CD4-positive, alpha-beta T cell (primary cell): ENCODE measurements at regions of chr3 and their contacts with region 1.

Region 1: GRCh38 chr3:4512895-4513616 is 19.9 kb downstream of the ITPR1 start:
- DNase-seq: no peak
- ATAC-seq: no peak
- H3K4me3 ChIP-seq: no peak overlapping the region
- H3K4me3 Mint-ChIP-seq: no peak overlapping the region
- H3K27ac ChIP-seq: no peak overlapping the region
- H3K27ac Mint-ChIP-seq: no peak overlapping the region
- H3K4me1 ChIP-seq: peaks cover 14% of the 10 kb centered on the region
- H3K4me1 Mint-ChIP-seq: peaks cover 59% of the 10 kb centered on the region
- H3K27me3 ChIP-seq: no peaks in the 10 kb centered on the region
- H3K27me3 Mint-ChIP-seq: no peaks in the 10 kb centered on the region
- CTCF ChIP-seq: no peak

Region 2: DNA sequence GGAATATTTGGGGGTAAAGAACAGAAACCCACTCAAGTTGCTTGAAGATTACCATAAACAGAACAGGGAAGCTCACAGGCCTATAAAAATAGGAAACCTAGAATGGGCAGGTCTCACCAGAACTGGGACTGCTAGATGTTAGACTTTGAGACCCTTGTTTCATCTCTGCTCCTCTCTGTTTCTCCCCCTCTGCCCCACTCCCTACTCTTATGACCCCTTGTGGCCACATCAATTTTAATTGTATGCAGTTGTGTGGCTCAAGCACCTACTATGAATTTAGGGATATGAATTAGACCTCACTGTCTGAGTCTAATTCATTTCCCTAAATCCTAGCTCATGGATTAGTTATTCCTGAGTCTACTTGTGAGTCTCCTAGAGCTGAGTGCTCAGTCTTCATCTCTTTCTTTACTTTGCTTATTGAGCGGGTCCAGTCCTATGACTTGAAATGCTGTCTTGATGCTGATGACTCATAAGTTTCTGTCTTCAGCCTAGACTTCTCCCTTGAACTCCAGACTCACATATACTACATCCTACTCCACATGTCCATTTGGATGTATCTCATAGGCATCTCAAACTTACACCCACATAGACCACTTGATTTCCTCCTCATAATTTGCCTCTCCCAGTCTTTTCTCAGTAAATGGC is 58.8 kb after region 1 on chr3:
- CTCF ChIA-PET with region 1: no interaction called
- POLR2A ChIA-PET with region 1: no interaction called
- intact Hi-C with region 1: loop called in 1 of 2 experiments (anchors 5 kb)
- DNase-seq: peak in 3 of 14 experiments; percentile 20 to 35 (median 27)
- ATAC-seq: peak; percentile 51
- H3K4me3 ChIP-seq: no peak overlapping the region
- H3K4me3 Mint-ChIP-seq: no peak overlapping the region
- H3K27ac ChIP-seq: no peak overlapping the region
- H3K27ac Mint-ChIP-seq: no peak overlapping the region
- H3K4me1 ChIP-seq: no peaks in the 10 kb centered on the region
- H3K4me1 Mint-ChIP-seq: peaks cover 13% of the 10 kb centered on the region
- H3K27me3 ChIP-seq: no peaks in the 10 kb centered on the region
- H3K27me3 Mint-ChIP-seq: no peaks in the 10 kb centered on the region
- CTCF ChIP-seq: peak; percentile 22

Region 3: GRCh38 chr3:4584456-4585249 is 71.6 kb after region 1 on chr3:
- CTCF ChIA-PET with region 1: no interaction called
- POLR2A ChIA-PET with region 1: no interaction called
- intact Hi-C with region 1: loop called in 1 of 2 experiments (anchors 5 kb)
- DNase-seq: peak in 4 of 14 experiments; percentile 35 to 58 (median 45)
- ATAC-seq: peak; percentile 48
- H3K4me3 ChIP-seq: peak overlapping the region; percentile 41
- H3K4me3 Mint-ChIP-seq: peak overlapping the region; percentile 88
- H3K27ac ChIP-seq: peak overlapping the region in 1 of 2 donors; percentile 42
- H3K27ac Mint-ChIP-seq: peak overlapping the region; percentile 79
- H3K4me1 ChIP-seq: peaks cover 35% of the 10 kb centered on the region
- H3K4me1 Mint-ChIP-seq: peaks cover 80% of the 10 kb centered on the region
- H3K27me3 ChIP-seq: no peaks in the 10 kb centered on the region
- H3K27me3 Mint-ChIP-seq: no peaks in the 10 kb centered on the region
- CTCF ChIP-seq: no peak

Region 4: GRCh38 chr3:4633078-4634004 is 120.3 kb after region 1 on chr3:
- CTCF ChIA-PET with region 1: interaction called, 3 read pairs
- POLR2A ChIA-PET with region 1: no interaction called
- intact Hi-C with region 1: loop called in 1 of 2 experiments (anchors 5 kb)
- DNase-seq: peak in 3 of 14 experiments; percentile 61 to 70 (median 69)
- ATAC-seq: peak; percentile 70
- H3K4me3 ChIP-seq: no peak overlapping the region
- H3K4me3 Mint-ChIP-seq: no peak overlapping the region
- H3K27ac ChIP-seq: no peak overlapping the region
- H3K27ac Mint-ChIP-seq: no peak overlapping the region
- H3K4me1 ChIP-seq: no peaks in the 10 kb centered on the region
- H3K4me1 Mint-ChIP-seq: peaks cover 7% of the 10 kb centered on the region
- H3K27me3 ChIP-seq: no peaks in the 10 kb centered on the region
- H3K27me3 Mint-ChIP-seq: no peaks in the 10 kb centered on the region
- CTCF ChIP-seq: peak; percentile 88